Body of pancreas (tissue), 4 donors: ENCODE measurements at regions of chr1 and their contacts with region 1.

Region 1: GRCh38 chr1:52127181-52128180 is 14.4 kb upstream of the ZFYVE9 start:
- DNase-seq: peak; percentile 49 to 65 (median 52)
- ATAC-seq: peak; percentile 65
- H3K4me3 ChIP-seq: no peak overlapping the region
- H3K27ac ChIP-seq: no peak overlapping the region
- H3K4me1 ChIP-seq: peaks cover 10% of the 10 kb centered on the region
- H3K27me3 ChIP-seq: no peaks in the 10 kb centered on the region
- CTCF ChIP-seq: peak; percentile 47 to 75 (median 62)
- POLR2A ChIP-seq: no peak

Region 2: GRCh38 chr1:52296345-52296744 is 168.9 kb after region 1 on chr1:
- intact Hi-C with region 1: loop called (anchors 10 kb)
- DNase-seq: peak in 2 of 4 donors; percentile 14 to 26
- ATAC-seq: peak; percentile 75
- H3K4me3 ChIP-seq: no peak overlapping the region
- H3K27ac ChIP-seq: peak overlapping the region in 1 of 4 donors; percentile 15
- H3K4me1 ChIP-seq: no peaks in the 10 kb centered on the region
- H3K27me3 ChIP-seq: no peaks in the 10 kb centered on the region
- CTCF ChIP-seq: peak; percentile 29 to 74 (median 63)
- POLR2A ChIP-seq: no peak

Region 3: DNA sequence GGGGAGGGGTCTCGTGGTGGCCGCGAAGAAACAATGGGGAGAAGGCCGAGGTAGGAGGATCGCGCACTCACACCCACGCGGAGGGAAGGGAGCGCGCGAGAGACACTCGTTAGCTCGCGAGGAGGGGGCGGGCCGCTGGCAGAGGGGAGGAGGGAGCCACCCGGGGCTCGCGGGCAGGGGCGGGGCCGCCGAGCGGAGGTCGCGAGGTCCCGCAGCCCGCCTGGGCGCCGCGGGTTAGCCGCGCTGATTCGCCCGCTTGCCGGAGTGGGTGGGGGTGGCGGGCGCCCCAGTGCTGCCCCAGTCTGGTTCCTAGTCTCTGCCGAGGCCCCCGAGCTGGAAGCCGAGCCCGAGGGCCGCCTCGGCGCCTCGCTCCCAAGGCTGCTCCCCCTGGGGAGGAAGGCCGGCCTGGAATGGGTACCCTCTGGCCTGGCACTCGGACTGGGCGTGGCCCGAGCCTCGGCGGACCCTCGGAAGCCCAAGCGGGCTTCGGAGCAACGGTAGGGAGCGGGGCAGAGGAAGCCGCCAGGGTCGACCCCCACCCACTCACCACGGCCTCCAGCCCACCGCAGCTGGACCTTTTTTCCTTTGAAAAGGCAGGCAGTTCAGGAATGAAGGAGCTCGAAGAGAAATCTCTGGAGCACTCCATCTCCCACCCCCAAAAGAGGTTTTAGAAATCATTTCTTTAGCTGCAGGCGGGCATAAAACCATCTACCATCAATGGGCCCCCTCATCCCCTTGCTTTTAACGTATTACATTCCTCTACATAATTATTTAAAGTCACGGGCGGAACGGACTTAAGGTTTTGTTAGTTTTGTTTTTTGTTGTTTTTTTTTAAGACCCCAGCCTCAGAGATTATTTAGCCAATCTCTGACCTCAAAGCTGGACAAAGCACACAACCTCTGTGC is 426.1 kb after region 1 on chr1:
- intact Hi-C with region 1: no loop called
- DNase-seq: peak; percentile 73 to 85 (median 80)
- ATAC-seq: peak; percentile 81
- H3K4me3 ChIP-seq: peak overlapping the region; percentile 39 to 88
- H3K27ac ChIP-seq: peak overlapping the region; percentile 83 to 90 (median 86)
- H3K4me1 ChIP-seq: peaks cover 28% of the 10 kb centered on the region
- H3K27me3 ChIP-seq: no peaks in the 10 kb centered on the region
- CTCF ChIP-seq: no peak
- POLR2A ChIP-seq: peak; percentile 37 to 48 (median 43)